Activated CD8-positive, alpha-beta T cell treated with anti-CD3 and anti-CD28 coated beads for 36 hours (primary cell): ENCODE measurements at regions of chr1 and their contacts with region 1.

Region 1: DNA sequence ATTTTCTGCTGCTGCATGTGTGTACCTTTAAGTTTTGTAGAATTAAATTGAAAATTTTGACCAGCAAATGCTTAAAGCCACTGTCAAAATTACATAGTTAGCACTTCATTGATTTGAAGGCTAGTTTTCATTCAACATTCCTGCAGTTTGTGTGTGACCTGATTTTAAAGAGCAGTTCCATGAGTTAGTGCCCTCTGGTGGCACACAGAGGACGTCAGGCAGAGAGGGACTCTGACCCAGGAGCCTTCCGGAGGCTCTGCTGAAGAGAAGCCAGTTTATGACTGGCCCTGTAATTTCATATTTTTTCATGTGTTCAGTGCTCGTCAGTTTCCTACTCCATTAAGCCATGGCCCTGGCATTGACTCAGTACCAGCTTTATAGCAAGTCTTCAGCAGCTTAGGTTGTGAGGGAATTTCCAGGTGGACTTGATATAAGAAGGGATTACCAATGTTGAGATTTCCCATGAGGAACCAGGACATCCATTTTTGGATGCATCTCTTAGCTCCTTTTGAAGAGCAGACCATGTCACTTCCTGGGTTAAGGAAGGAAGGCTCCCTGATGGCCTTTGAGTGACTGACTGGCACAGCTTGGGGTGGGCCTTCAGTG is 104.7 kb downstream of the CAMTA1 start:
- DNase-seq: peak; percentile 58
- ATAC-seq: peak; percentile 65
- H3K4me3 Mint-ChIP-seq: no peak overlapping the region
- H3K27ac Mint-ChIP-seq: no peak overlapping the region
- H3K4me1 Mint-ChIP-seq: peaks cover 8% of the 10 kb centered on the region
- H3K27me3 Mint-ChIP-seq: no peaks in the 10 kb centered on the region
- CTCF ChIP-seq: peak; percentile 74

Region 2: DNA sequence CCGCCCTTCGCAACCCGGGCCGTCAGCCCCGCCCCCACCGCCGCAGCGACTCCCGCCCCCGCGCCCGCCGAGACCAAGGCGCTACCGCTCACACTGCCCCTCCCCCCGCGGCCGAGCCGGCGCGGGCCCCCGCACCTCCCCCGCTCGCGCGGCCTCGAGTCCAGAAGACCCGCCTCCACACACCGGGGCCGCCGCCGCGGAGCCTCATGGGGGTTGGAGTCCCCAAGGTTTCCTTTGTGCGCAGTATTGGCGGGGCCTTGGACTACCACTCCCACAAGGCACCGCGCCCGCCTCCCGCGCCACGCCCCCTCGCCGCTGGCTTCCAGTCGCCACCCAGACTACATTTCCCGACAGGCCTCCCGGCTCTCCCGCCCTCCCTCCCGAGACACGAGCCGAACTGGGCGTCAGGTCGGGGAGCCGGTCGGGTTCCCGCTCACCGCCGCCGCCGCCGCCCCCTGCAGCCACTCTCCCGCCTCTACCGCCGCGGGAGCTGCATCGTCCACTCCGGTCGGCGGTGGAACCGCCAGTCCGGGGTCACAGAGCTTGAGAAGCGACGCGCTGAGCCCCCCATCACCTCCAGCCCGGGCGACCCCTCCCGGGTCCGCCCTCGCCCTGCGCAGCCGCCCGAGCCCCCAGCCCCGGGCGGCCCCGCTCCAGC is 276.5 kb before region 1 on chr1 and contains the start of gene PHF13:
- CTCF ChIA-PET with region 1: no interaction called
- POLR2A ChIA-PET with region 1: no interaction called
- intact Hi-C with region 1: no loop called
- DNase-seq: peak; percentile 100
- ATAC-seq: peak; percentile 96
- H3K4me3 Mint-ChIP-seq: peak within 1 kb of the TSS; percentile 85
- H3K27ac Mint-ChIP-seq: peak within 1 kb of the TSS; percentile 83
- H3K4me1 Mint-ChIP-seq: peaks cover 14% of the 10 kb centered on the region
- H3K27me3 Mint-ChIP-seq: no peaks in the 10 kb centered on the region
- CTCF ChIP-seq: no peak
- total RNA-seq, gene PHF13: 12.5 to 14.8 TPM

Region 3: GRCh38 chr1:6727535-6727934 is 162.4 kb before region 1 on chr1:
- CTCF ChIA-PET with region 1: interaction called, 8 read pairs
- POLR2A ChIA-PET with region 1: no interaction called
- intact Hi-C with region 1: loop called (anchors 5 kb)
- DNase-seq: peak; percentile 73
- ATAC-seq: peak; percentile 76
- H3K4me3 Mint-ChIP-seq: no peak overlapping the region
- H3K27ac Mint-ChIP-seq: no peak overlapping the region
- H3K4me1 Mint-ChIP-seq: no peaks in the 10 kb centered on the region
- H3K27me3 Mint-ChIP-seq: peaks cover 3% of the 10 kb centered on the region
- CTCF ChIP-seq: peak; percentile 95

Region 4: DNA sequence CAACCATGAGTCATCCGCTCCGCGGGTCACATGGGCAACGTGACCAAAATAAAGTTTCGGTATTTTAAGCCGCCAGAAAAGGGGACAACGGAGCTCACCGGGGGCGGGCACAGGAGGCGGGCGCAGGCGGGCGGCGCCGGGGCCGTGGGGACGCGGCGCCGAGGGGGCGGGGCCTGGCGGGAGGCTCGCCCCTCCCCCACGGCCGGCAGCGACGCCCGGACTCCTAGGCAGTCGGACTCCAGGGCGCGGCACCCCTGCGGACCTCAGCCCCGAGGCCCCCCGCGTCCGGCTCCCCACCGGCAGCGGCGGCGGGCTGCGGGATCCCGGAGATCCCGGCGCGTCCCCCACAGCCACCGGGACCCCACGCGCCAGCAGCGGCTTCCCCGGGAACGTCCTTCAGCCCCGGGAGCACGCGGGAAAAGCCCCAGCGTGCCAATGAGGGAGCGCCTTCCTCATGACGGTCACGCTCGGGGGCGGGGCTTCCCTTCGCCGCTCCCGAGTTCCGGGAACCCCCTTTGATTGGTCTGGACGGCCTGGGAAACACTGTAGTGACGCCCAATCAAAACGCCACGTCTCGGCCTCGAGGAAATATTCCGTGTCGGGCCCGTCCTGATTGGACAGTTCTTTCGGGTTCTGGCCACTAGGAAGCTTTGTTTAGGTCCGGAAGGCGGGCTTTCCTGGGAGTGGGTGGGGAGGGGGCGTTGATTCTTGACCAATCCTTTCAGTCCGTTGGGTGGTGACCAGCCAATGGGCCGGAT is 105.2 kb before region 1 on chr1:
- CTCF ChIA-PET with region 1: interaction called, 14 read pairs
- POLR2A ChIA-PET with region 1: interaction called, 4 read pairs
- intact Hi-C with region 1: no loop called
- DNase-seq: peak; percentile 100
- ATAC-seq: peak; percentile 82
- H3K4me3 Mint-ChIP-seq: peak overlapping the region; percentile 80
- H3K27ac Mint-ChIP-seq: peak overlapping the region; percentile 85
- H3K4me1 Mint-ChIP-seq: peaks cover 39% of the 10 kb centered on the region
- H3K27me3 Mint-ChIP-seq: no peaks in the 10 kb centered on the region
- CTCF ChIP-seq: no peak

Region 5: DNA sequence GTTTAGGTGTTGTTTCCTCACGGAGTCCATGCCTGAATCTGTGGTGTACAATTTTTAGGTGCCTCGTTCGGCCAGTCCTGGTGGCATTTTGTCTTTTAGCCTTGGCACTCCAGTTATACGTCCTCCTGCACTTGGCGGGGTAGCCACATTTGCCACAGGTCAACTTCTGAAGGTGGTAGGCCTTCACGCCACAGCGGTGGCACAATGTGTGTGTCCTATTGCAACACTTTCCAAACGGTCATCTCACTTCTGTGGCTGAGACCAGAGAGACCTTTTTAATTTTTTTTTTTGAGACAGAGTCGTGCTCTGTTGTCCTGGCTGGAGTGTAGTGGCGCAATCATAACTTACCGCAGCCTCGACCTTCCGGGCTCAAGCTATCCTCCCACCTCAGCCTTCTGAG is 55.6 kb before region 1 on chr1:
- CTCF ChIA-PET with region 1: interaction called, 13 read pairs
- POLR2A ChIA-PET with region 1: interaction called, 3 read pairs
- intact Hi-C with region 1: no loop called
- DNase-seq: no peak
- ATAC-seq: no peak
- H3K4me3 Mint-ChIP-seq: no peak overlapping the region
- H3K27ac Mint-ChIP-seq: no peak overlapping the region
- H3K4me1 Mint-ChIP-seq: peaks cover 7% of the 10 kb centered on the region
- H3K27me3 Mint-ChIP-seq: no peaks in the 10 kb centered on the region
- CTCF ChIP-seq: no peak

Region 6: DNA sequence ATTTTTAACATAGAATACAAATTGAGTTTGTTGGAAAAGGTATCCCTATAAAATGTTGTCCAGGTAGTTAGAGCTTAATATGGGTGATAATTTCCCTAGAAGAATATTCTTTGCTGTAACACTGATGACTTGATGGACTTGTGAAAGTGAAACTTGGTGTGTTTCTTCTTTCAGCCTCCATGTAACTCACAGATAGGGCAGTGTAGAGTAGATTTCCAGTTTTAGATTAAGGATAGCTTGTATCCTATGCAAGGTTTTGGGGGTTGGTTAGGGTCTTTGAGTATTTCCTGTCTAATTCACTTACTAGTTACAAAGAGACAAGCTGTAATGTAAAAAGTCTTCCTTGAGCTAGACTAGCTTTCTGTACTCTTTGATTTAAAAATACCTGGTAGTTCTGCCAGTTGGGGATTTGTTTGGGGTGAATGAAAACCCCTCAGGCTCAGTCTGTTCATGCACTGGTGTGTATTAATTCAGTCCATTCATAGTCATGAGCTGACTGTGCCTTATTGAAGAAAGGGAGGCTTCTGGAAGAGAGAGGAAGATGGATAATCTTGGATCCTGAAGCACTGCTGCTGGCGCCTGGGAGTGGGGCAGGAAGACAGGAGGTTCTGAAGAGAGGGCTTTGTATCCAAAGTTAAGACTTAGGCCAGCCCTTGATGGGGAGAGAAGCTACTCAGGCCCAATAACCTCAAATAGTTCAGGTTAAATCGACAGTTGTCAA is 21.2 kb before region 1 on chr1:
- CTCF ChIA-PET with region 1: interaction called, 14 read pairs
- POLR2A ChIA-PET with region 1: no interaction called
- intact Hi-C with region 1: no loop called
- DNase-seq: no peak
- ATAC-seq: no peak
- H3K4me3 Mint-ChIP-seq: no peak overlapping the region
- H3K27ac Mint-ChIP-seq: no peak overlapping the region
- H3K4me1 Mint-ChIP-seq: peaks cover 35% of the 10 kb centered on the region
- H3K27me3 Mint-ChIP-seq: no peaks in the 10 kb centered on the region
- CTCF ChIP-seq: no peak

Region 7: DNA sequence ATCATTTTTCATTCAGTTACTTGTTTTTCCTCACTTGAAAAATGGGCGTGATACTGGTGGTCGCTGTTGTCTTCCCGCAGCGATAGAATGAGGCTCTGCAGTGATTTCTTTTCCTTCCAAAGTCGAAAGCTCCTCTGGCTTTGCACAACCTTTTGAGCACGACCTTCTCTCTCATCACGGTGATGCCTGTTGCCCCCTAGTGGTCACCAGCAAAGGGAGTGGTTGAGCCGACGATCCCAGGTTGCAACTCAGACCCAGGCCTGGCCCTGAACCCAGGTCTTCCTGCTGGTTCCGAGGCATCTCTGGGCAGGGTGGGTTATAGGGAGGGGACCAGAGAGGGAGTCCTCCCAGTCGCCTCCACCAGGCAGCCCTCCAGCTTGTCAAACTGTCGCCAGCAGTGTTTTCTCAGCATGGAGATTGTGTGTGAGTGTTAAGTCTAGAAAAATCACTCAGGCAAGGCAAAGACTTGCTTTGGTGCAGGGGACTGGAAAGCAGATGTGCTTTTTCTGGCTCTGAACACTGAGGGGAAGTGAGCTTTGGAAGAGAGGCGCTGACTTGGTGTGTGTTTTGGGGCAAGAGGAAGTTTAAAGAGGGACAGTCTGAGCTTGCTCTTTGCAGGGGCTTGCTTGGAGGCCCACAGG is 180.5 kb after region 1 on chr1:
- CTCF ChIA-PET with region 1: interaction called, 10 read pairs
- POLR2A ChIA-PET with region 1: no interaction called
- intact Hi-C with region 1: no loop called
- DNase-seq: peak; percentile 67
- ATAC-seq: peak; percentile 72
- H3K4me3 Mint-ChIP-seq: no peak overlapping the region
- H3K27ac Mint-ChIP-seq: no peak overlapping the region
- H3K4me1 Mint-ChIP-seq: peaks cover 2% of the 10 kb centered on the region
- H3K27me3 Mint-ChIP-seq: peaks cover 19% of the 10 kb centered on the region
- CTCF ChIP-seq: peak; percentile 77